ENCODE measurements at regions of chr6 and their contacts with region 1.

Region 1: GRCh38 chr6:75368151-75368779 is 83.7 kb upstream of the TMEM30A start:
- DNase-seq: no peak
- ATAC-seq: peak; percentile 88
- H3K4me3 ChIP-seq: no peak overlapping the region
- H3K27ac ChIP-seq: no peak overlapping the region
- H3K4me1 ChIP-seq: no peaks in the 10 kb centered on the region
- H3K27me3 ChIP-seq: no peaks in the 10 kb centered on the region
- CTCF ChIP-seq: peak; percentile 46 to 56 (median 50); a peak in 5 of 6 replicates
- EP300 ChIP-seq: no peak
- POLR2A ChIP-seq: no peak
- RAD21 ChIP-seq: peak; percentile 69

Region 2: GRCh38 chr6:75504465-75505228 is 136.4 kb after region 1 on chr6:
- CTCF ChIA-PET with region 1: interaction called, 51 read pairs
- POLR2A ChIA-PET with region 1: no interaction called
- RAD21 ChIA-PET with region 1: interaction called, 30 read pairs
- SMC1A ChIA-PET with region 1: interaction called, 35 read pairs
- in situ Hi-C with region 1: no loop called
- intact Hi-C with region 1: loop called (anchors 10 kb)
- DNase-seq: no peak
- ATAC-seq: peak; percentile 55
- H3K4me3 ChIP-seq: no peak overlapping the region
- H3K27ac ChIP-seq: no peak overlapping the region
- H3K4me1 ChIP-seq: no peaks in the 10 kb centered on the region
- H3K27me3 ChIP-seq: no peaks in the 10 kb centered on the region
- CTCF ChIP-seq: peak in 1 of 3 experiments; percentile 33; a peak in 2 of 6 replicates
- EP300 ChIP-seq: no peak
- POLR2A ChIP-seq: no peak
- RAD21 ChIP-seq: peak; percentile 42; the same call in 1 of the 2 replicates

Region 3: DNA sequence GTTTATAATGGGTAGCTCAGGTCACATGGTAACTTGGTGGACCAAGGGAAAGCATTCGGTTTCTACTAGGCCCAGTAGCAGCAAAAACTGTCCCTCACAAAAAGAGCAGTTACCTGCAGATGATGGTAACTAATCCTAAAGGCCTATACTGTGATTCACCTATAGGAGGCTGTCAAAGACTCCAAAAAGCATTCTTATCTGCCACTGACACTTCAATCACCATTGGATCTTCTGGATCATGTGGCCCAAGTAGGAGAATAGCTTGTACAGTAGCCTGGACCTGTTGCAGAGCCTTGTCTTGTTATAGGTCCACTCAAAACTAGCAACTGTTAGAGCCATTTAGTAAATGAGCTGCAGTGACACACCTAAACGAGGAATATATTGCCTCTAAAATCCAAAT is 148.5 kb after region 1 on chr6:
- CTCF ChIA-PET with region 1: interaction called, 20 read pairs
- POLR2A ChIA-PET with region 1: no interaction called
- RAD21 ChIA-PET with region 1: interaction called, 19 read pairs
- SMC1A ChIA-PET with region 1: interaction called, 82 read pairs
- in situ Hi-C with region 1: loop called (anchors 10 kb)
- intact Hi-C with region 1: no loop called
- DNase-seq: no peak
- ATAC-seq: no peak
- H3K4me3 ChIP-seq: no peak overlapping the region
- H3K27ac ChIP-seq: no peak overlapping the region
- H3K4me1 ChIP-seq: no peaks in the 10 kb centered on the region
- H3K27me3 ChIP-seq: no peaks in the 10 kb centered on the region
- CTCF ChIP-seq: no peak
- EP300 ChIP-seq: no peak
- POLR2A ChIP-seq: no peak
- RAD21 ChIP-seq: no peak

Region 4: GRCh38 chr6:75563032-75563431 is 194.8 kb after region 1 on chr6:
- CTCF ChIA-PET with region 1: interaction called, 15 read pairs
- POLR2A ChIA-PET with region 1: no interaction called
- RAD21 ChIA-PET with region 1: interaction called, 3 read pairs
- SMC1A ChIA-PET with region 1: no interaction called
- in situ Hi-C with region 1: no loop called
- intact Hi-C with region 1: no loop called
- DNase-seq: no peak
- ATAC-seq: peak; percentile 99
- H3K4me3 ChIP-seq: no peak overlapping the region
- H3K27ac ChIP-seq: no peak overlapping the region
- H3K4me1 ChIP-seq: no peaks in the 10 kb centered on the region
- H3K27me3 ChIP-seq: no peaks in the 10 kb centered on the region; a peak in 1 of 4 replicates
- CTCF ChIP-seq: peak; percentile 51 to 60 (median 57)
- EP300 ChIP-seq: no peak
- POLR2A ChIP-seq: no peak
- RAD21 ChIP-seq: peak; percentile 45

Measured in GM12878 (cell line).